ENCODE measurements at regions of chr15 and their contacts with region 1.

Region 1: GRCh38 chr15:74884428-74885223 is 5.2 kb upstream of the MPI start:
- DNase-seq: no peak
- ATAC-seq: no peak
- H3K4me3 ChIP-seq: no peak overlapping the region
- H3K4me3 Mint-ChIP-seq: peak overlapping the region; percentile 23
- H3K27ac ChIP-seq: no peak overlapping the region
- H3K27ac Mint-ChIP-seq: no peak overlapping the region
- H3K4me1 ChIP-seq: peaks cover 8 to 19% of the 10 kb centered on the region in 2 donors
- H3K4me1 Mint-ChIP-seq: peaks cover 11% of the 10 kb centered on the region
- H3K27me3 ChIP-seq: no peaks in the 10 kb centered on the region
- H3K27me3 Mint-ChIP-seq: no peaks in the 10 kb centered on the region
- CTCF ChIP-seq: no peak

Region 2: DNA sequence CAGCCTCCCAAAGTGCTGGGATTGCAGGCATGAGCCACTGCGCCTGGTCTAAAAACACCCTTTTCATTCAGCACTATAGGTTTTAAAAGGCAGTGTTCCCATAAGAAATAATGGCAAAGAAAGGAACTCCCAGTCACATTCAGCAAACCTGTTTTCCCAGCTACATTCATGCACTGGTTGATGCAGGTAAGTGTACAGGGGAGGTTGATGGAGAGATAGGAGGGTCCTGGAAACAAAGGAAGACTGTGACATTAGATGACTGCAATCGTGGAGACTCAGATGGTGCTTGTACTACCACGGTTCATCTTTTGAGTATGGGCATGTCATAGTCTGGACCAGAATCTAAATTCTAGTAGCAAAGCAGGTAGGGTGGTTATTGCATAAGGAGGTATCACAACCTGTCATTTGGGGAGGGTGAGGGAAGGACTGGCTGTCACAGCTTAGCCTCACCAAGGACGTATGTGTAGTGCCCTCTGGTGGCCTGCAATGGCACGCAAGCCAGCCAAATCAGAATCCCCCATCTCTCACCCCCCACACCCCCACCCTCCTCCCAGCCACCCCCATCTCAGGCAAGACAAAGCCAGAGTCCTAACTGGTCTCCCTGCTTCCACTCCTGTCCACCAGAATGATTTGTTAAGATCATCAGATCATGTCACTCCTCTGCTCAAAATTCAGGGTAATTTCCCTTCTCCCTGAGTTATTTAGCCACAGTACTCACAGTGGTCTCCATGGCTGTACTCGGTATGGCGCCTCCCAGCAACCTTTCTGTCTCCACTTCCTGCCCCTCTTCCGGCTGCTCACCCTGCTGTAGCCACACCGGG is 394.9 kb before region 1 on chr15:
- CTCF ChIA-PET with region 1: no interaction called
- POLR2A ChIA-PET with region 1: interaction called, 10 read pairs
- intact Hi-C with region 1: no loop called
- DNase-seq: peak; percentile 82
- ATAC-seq: peak; percentile 96
- H3K4me3 ChIP-seq: no peak overlapping the region
- H3K4me3 Mint-ChIP-seq: peak overlapping the region; percentile 13
- H3K27ac ChIP-seq: no peak overlapping the region
- H3K27ac Mint-ChIP-seq: no peak overlapping the region
- H3K4me1 ChIP-seq: peaks cover 10% of the 10 kb centered on the region in 2 donors
- H3K4me1 Mint-ChIP-seq: peaks cover 11% of the 10 kb centered on the region
- H3K27me3 ChIP-seq: no peaks in the 10 kb centered on the region
- H3K27me3 Mint-ChIP-seq: no peaks in the 10 kb centered on the region
- CTCF ChIP-seq: peak; percentile 78

Region 3: DNA sequence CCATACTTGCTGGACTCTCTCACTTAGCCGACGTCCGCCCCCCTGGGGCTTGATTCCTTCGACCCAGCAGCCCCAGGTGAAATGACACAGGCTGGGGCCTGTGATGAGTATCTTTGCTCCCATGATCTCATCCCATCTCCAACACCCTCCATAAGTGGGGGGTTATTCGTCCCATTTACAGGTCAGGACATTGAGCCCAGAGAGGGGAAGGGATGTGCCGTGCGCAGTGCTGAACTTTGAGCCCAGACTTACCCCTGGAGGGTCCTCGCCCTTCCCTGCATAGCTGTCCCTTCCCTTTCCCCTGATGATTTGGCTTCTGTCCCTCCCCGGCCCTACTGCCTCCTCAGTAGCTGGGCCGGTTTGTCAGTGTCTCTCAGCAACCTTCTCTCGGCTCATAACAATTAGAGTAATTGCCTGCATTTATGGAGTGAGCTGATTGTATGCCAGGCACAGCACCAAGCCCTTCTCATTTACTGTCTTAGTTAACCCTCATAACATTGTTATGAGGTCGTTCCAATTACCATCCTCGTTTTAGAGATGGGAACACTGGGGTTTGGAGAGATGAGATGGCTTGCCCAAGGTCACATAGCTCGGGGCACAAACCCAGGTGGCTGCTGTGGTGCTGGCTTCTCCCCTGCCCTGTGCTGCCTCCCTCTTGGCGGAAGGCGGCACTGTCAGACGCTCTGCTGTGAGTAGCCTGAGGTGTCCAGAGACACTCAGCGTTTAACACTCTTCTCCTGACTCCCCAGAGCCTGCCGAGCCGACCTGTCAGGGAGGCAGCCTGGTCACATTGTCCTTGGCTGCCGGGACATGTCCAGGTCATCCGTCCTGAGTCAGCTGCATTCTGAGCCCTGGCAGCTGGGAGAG is 67.6 kb before region 1 on chr15:
- CTCF ChIA-PET with region 1: no interaction called
- POLR2A ChIA-PET with region 1: no interaction called
- intact Hi-C with region 1: no loop called
- DNase-seq: no peak
- ATAC-seq: no peak
- H3K4me3 ChIP-seq: no peak overlapping the region
- H3K4me3 Mint-ChIP-seq: no peak overlapping the region
- H3K27ac ChIP-seq: no peak overlapping the region
- H3K27ac Mint-ChIP-seq: no peak overlapping the region
- H3K4me1 ChIP-seq: peaks cover 35 to 52% of the 10 kb centered on the region in 2 donors
- H3K4me1 Mint-ChIP-seq: peaks cover 42% of the 10 kb centered on the region
- H3K27me3 ChIP-seq: peaks cover 0 to 11% (median 2%) of the 10 kb centered on the region in 4 experiments
- H3K27me3 Mint-ChIP-seq: no peaks in the 10 kb centered on the region
- CTCF ChIP-seq: no peak

Region 4: GRCh38 chr15:74867466-74868038 is 17.1 kb before region 1 on chr15:
- CTCF ChIA-PET with region 1: no interaction called
- POLR2A ChIA-PET with region 1: interaction called, 11 read pairs
- intact Hi-C with region 1: no loop called
- DNase-seq: no peak
- ATAC-seq: no peak
- H3K4me3 ChIP-seq: no peak overlapping the region
- H3K4me3 Mint-ChIP-seq: peak overlapping the region; percentile 33
- H3K27ac ChIP-seq: peak overlapping the region in 1 of 2 donors; percentile 38
- H3K27ac Mint-ChIP-seq: peak overlapping the region; percentile 70
- H3K4me1 ChIP-seq: peaks cover 47 to 56% of the 10 kb centered on the region in 2 donors
- H3K4me1 Mint-ChIP-seq: peaks cover 70% of the 10 kb centered on the region
- H3K27me3 ChIP-seq: no peaks in the 10 kb centered on the region
- H3K27me3 Mint-ChIP-seq: no peaks in the 10 kb centered on the region
- CTCF ChIP-seq: no peak